ENCODE measurements at regions of chr1 and their contacts with region 1.

Region 1: DNA sequence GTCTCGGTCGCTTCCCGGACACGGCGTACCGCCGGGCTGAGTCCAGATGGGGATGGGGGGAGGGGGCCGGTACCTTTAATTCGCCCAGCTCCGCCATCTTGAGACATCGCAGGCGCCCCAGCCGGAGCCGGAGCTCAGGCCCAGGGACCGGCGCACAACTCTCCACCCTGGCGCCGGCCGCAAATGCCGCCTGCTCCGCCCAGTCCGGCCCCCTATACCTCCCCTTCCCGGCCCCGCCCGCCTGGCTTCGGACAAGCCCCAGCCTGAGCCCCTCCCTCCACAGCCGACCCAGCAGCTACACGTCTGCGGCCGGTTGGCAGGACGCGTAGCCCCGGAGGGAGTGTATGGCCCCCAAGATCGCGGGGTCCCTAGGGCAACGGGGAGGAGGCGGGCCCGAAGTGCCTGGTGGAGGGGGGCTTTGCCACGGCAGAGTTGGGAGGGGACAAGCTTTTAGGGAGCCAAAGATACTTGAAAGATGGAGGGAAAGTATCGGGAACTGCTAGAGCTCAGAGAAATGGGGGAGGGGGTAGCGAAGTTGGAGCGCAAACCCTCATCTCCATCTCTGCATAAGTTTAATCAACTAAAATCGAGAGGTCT is at the start of gene PIAS3:
- DNase-seq: peak; percentile 98
- ATAC-seq: peak; percentile 82
- H3K4me3 Mint-ChIP-seq: peak within 1 kb of the TSS; percentile 98
- H3K27ac Mint-ChIP-seq: peak within 1 kb of the TSS; percentile 92
- H3K4me1 Mint-ChIP-seq: peaks cover 17% of the 10 kb centered on the region
- H3K27me3 Mint-ChIP-seq: no peaks in the 10 kb centered on the region
- CTCF ChIP-seq: no peak
- total RNA-seq, gene PIAS3: 44.9 to 52.4 TPM (median 49.6 TPM) in 3 replicates

Region 2: DNA sequence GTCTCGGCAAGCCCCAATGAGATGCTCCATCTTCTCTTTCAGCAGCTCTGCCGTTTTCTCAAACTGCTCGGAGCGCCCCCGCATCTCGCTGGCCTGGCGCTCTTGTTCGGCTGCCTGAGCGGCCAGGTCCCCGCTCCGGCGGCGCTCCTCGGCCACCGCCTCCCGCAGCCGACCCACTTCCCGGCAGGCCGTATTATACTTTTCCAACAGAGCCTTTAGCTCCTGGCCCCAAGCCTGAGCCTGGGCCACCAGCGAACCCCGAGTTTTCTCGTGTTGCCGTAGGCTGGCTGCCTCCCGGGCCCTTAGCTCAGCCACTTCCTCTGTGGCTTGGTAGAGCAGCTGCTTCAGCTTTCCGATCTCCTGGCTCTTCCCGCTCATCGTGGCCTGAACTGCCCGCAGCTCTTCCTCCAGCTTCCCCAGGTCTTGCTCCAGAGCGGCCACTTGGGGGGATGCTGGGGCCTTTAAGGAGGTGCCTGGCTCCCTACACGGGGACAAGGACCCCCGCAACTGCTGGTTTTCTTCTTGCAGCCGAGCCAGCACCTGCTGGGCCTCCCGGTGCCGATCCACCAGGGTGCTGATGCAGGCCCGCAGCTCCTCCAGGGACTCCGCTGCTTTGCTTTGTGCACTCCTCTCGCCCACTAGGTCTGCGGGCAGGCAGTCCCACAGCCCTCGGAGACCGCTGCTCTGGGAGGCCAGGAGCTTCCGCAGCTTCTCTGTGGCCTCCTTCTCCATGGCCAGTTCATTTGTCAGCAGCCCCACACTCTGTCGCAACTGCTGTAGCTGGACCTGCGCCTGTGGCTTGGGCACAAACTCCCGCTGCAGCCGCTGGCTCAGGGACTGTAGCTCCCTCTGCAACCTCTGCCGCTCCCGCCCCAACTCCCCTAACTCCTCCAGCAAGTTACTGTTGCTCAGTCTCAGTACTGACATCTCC is 13.3 kb after region 1 on chr1:
- CTCF ChIA-PET with region 1: interaction called, 67 read pairs
- POLR2A ChIA-PET with region 1: interaction called, 46 read pairs
- DNase-seq: peak; percentile 57
- ATAC-seq: peak; percentile 76
- H3K4me3 Mint-ChIP-seq: peak overlapping the region; percentile 69
- H3K27ac Mint-ChIP-seq: no peak overlapping the region; the same call in 1 of the 2 replicates
- H3K4me1 Mint-ChIP-seq: peaks cover 37% of the 10 kb centered on the region
- H3K27me3 Mint-ChIP-seq: peaks cover 39% of the 10 kb centered on the region
- CTCF ChIP-seq: no peak

Region 3: DNA sequence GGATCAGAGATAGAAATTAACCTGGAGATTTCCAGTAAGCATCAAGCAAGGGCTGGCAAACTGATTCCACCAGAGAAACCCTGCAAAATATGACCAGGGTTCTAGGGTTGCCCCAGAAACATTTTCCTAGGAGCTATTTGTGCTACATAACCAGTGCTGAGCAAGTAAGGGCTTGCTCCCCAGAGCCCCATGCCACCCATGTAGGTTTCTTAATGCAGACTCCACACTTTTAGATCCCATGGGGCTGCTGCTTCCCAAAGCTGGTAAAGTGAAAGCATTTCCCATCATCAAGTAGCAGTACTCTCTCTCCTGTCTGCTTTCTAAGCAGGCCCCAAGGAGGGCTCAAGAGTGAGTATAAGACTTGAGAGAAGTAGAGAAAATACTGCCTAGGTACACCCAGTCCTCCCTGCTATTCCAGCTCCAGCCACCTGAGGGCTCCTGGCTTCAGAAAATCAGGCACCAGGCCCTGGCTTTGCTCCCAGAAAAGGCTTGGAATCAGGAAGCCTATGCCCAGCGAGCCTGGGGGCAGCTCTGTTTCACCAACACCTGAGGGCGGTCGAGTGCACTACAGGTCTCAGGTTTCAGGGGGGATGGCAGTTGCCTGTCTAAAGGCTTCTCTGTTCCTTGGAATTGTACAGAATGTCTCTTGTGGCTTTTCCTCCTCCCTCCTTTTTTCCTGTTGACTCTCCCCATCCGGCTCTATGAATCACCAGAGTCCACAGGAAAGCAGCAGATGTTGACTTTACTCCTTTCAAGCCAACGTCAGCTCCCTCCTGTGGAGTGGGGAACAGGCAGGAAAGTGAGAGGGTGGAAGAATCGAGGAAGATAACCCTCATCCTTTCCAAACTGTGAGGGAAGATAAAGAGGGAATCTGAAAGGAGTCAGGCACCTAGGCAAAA is 32.8 kb after region 1 on chr1:
- CTCF ChIA-PET with region 1: interaction called, 65 read pairs
- POLR2A ChIA-PET with region 1: interaction called, 14 read pairs
- DNase-seq: peak; percentile 98
- ATAC-seq: peak; percentile 100
- H3K4me3 Mint-ChIP-seq: peak overlapping the region; percentile 62
- H3K27ac Mint-ChIP-seq: peak overlapping the region; percentile 95
- H3K4me1 Mint-ChIP-seq: peaks cover 25% of the 10 kb centered on the region
- H3K27me3 Mint-ChIP-seq: peaks cover 15% of the 10 kb centered on the region
- CTCF ChIP-seq: peak; percentile 85

Region 4: DNA sequence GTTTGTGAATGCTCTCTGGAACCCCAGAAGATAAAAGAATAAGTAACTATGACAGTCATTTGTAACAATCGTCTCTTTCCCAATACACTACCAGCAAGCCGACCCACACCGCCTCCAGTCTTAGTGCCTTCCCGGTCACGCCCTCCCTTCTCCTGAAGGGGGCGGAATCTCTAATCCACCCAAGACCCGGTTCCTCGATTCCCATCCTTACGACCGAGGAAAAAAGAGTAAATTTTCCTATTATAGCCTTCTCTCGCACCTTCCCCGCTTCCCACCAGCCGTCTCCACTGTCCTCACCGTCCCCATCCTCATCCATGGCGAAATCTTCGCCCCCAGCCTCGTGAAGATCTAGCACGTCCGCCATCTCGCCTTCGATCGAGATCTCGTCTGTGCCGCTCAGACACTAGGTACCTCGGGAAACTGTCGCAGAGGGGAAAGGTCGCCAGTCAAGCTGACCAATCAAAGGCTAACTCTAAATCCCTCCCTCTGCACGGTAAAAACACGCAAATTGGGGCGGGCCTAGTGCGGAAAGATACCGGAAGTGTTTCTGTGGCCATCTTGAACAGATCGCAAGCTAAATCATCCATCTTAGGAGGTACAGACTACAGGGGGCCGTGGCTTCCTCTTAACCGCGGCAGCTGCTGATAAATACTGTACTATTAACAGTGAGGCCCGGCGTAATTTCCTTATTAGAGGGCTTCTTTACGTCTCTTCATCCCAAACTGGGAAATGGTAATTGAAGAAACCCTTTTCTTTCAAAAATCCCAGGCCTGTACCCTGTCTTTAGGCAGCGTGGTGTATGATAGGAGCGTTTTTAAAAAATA is 68.3 kb after region 1 on chr1 and contains the start of gene RBM8A:
- CTCF ChIA-PET with region 1: interaction called, 18 read pairs
- POLR2A ChIA-PET with region 1: interaction called, 24 read pairs
- DNase-seq: peak; percentile 91
- ATAC-seq: peak; percentile 98
- H3K4me3 Mint-ChIP-seq: no peak within 1 kb of the TSS; the same call in none of the 2 replicates
- H3K27ac Mint-ChIP-seq: no peak within 1 kb of the TSS; the same call in 1 of the 2 replicates
- H3K4me1 Mint-ChIP-seq: peaks cover 17% of the 10 kb centered on the region
- H3K27me3 Mint-ChIP-seq: no peaks in the 10 kb centered on the region
- CTCF ChIP-seq: peak; percentile 23; the same call in 1 of the 2 replicates
- total RNA-seq, gene RBM8A: 199 to 215 TPM (median 212 TPM) in 3 replicates

Region 5: DNA sequence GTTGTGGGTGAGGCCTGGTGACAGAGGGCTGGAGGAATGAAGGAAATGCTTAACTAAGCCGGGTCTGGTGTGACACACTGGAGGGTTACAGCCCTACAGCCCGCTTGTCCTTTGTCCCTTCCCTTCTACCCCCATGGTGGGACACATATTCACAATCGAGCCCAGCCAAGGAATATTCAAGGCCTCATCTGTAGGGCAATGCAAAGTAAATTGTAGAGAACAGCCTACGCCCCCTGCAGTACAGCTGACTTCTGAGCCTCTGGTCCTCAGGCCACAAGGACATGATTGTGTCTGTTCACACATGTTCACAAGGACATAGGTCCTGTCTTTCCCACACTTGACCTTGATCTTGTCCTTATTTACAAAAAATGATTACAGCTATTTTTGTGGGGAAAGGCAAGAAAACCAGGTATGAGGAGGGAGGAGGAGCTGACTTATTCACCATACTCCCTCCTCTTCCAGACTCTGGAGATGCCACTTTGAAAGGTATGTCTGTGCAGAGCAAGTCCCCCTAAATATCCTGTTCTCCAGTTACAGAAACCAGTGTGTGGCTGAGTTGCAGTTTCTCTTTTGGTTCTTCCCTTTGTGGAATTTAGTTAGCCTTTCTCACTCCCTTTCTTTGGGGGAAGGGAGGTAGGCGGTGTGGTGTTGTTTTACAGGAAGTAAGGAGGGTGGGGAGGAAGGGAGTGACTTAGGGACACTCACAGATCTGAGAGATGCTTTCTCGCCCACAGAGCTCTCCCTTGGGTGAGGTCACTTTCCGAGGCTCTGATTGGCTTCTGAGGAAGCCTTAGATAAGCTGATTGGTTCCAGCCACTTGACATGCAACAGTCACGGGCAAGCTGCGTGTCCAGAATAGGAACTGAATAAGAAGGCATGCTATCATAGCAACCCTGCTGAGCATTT is 120.1 kb after region 1 on chr1:
- CTCF ChIA-PET with region 1: interaction called, 13 read pairs
- POLR2A ChIA-PET with region 1: interaction called, 8 read pairs
- DNase-seq: peak; percentile 80
- ATAC-seq: peak; percentile 93
- H3K4me3 Mint-ChIP-seq: no peak overlapping the region
- H3K27ac Mint-ChIP-seq: no peak overlapping the region
- H3K4me1 Mint-ChIP-seq: peaks cover 18% of the 10 kb centered on the region
- H3K27me3 Mint-ChIP-seq: no peaks in the 10 kb centered on the region; the same call in 1 of the 2 replicates
- CTCF ChIP-seq: no peak

Measured in WTC11 (cell line).